Activated CD4-positive, alpha-beta memory T cell treated with anti-CD3 and anti-CD28 coated beads, Interleukin-2, amount 10 ng/mL, durations not matched to agents 7 days and 5 days (primary cell): ENCODE measurements at regions of chr2 and their contacts with region 1.

Region 1: GRCh38 chr2:10812362-10813162 is at the start of gene PDIA6:
- DNase-seq: peak; percentile 95
- H3K4me3 Mint-ChIP-seq: peak within 1 kb of the TSS; percentile 88
- H3K27ac Mint-ChIP-seq: peak within 1 kb of the TSS; percentile 89
- H3K4me1 Mint-ChIP-seq: peaks cover 37% of the 10 kb centered on the region
- H3K27me3 Mint-ChIP-seq: peaks cover 15% of the 10 kb centered on the region
- total RNA-seq, gene PDIA6: 161 to 165 TPM

Region 2: DNA sequence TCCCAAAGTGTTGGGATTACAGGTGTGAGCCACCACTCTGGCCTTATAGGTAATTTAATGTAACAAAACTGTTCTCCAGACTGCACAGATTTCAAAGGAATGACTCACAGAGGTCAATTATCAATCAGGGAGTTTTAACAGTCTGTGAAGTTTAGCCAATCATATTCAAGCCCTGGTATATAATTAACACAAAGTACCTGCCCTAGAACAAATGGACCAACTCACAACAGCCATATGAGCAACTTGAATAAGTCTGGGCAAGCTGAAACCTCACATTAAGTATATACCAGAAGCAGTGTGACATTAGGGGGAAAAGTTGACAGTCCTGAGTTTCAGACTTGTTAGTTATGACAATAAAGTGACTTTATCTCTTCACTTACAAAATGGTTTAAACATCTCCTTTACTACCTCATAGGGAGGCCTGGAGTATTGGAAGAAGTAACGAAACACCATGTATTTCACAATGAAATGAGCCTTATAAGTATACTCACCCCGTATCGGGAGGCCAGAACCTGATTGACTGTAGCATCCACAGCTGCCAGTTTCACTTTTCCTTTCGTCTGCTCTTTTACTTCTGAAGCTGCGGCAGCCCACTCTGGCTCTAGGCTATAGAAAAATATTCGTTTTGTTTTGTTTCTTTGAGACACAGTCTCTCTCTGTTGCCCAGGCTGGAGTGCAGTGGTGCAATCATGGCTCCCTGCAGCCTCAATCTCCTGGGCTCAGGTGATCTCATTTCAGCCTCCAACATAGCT is 22.2 kb before region 1 on chr2:
- CTCF ChIA-PET with region 1: no interaction called
- POLR2A ChIA-PET with region 1: interaction called, 26 read pairs
- DNase-seq: peak; percentile 57
- H3K4me3 Mint-ChIP-seq: peak overlapping the region; percentile 74
- H3K27ac Mint-ChIP-seq: peak overlapping the region; percentile 85
- H3K4me1 Mint-ChIP-seq: peaks cover 37% of the 10 kb centered on the region
- H3K27me3 Mint-ChIP-seq: no peaks in the 10 kb centered on the region

Region 3: GRCh38 chr2:11411768-11412448 is 599.3 kb after region 1 on chr2:
- CTCF ChIA-PET with region 1: no interaction called
- POLR2A ChIA-PET with region 1: no interaction called
- DNase-seq: no peak
- H3K4me3 Mint-ChIP-seq: no peak overlapping the region
- H3K27ac Mint-ChIP-seq: no peak overlapping the region
- H3K4me1 Mint-ChIP-seq: no peaks in the 10 kb centered on the region
- H3K27me3 Mint-ChIP-seq: peaks cover 6% of the 10 kb centered on the region